ENCODE measurements at regions of chr1 and their contacts with region 1.

Region 1: GRCh38 chr1:15100121-15100874 is 53.2 kb upstream of the TMEM51 start:
- DNase-seq: peak; percentile 19 to 60 (median 35)
- ATAC-seq: peak; percentile 55
- H3K4me3 ChIP-seq: no peak overlapping the region
- H3K4me3 Mint-ChIP-seq: no peak overlapping the region
- H3K27ac ChIP-seq: no peak overlapping the region
- H3K27ac Mint-ChIP-seq: no peak overlapping the region
- H3K4me1 ChIP-seq: no peaks in the 10 kb centered on the region
- H3K4me1 Mint-ChIP-seq: peaks cover 7% of the 10 kb centered on the region
- H3K27me3 ChIP-seq: peaks cover 0 to 9% of the 10 kb centered on the region in 2 experiments
- H3K27me3 Mint-ChIP-seq: peaks cover 31% of the 10 kb centered on the region
- CTCF ChIP-seq: peak; percentile 69

Region 2: DNA sequence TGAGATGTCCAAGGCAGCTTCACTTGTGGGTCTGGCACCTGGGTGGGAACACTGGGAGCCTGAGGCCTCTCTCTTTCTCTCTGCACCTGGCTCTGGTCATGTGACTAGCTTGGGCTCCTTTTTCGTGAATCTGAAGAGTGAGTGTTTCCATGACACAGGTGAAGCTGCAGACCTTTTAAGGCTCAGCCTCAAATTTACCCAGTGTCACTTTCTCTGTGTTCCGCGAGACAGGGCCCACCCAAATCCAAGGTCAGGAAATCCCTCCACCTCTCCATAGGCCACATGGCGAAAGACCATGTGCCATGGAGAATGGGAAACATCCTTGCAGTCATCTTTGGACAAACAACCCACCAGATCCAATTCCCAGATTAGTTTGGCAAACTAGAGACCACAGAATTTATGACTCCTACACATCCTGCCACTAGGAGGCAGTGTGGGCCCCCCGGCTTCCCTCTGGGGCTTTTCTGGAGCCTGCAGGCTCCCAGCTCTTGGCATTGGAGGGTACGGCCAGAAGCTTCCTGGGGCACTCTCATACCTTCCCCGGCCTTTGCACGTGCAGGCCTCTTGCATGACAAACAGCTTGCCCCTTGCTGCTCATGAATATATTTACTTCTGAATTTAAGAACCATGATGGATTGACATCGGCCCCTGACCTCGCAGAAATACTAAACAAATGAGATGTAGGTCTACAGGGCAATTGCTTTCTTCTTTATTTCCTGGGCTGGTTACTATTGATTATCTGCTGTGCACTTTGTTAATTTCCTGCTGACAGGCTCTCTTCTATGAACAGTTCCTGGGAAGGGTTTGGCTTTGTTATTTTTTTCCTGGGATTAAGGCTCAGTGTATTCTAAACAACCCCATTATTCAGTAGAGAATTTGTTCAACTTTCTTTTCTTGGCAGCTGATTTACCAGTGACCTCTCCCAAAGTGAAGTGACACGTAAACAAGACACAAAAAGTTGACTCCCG is 321.1 kb before region 1 on chr1:
- CTCF ChIA-PET with region 1: no interaction called
- POLR2A ChIA-PET with region 1: no interaction called
- intact Hi-C with region 1: loop called in 1 of 2 experiments (anchors 2 kb)
- DNase-seq: peak in 5 of 9 experiments; percentile 7 to 20 (median 16)
- ATAC-seq: no peak
- H3K4me3 ChIP-seq: no peak overlapping the region
- H3K4me3 Mint-ChIP-seq: no peak overlapping the region
- H3K27ac ChIP-seq: no peak overlapping the region
- H3K27ac Mint-ChIP-seq: no peak overlapping the region
- H3K4me1 ChIP-seq: no peaks in the 10 kb centered on the region
- H3K4me1 Mint-ChIP-seq: no peaks in the 10 kb centered on the region
- H3K27me3 ChIP-seq: no peaks in the 10 kb centered on the region
- H3K27me3 Mint-ChIP-seq: no peaks in the 10 kb centered on the region
- CTCF ChIP-seq: peak; percentile 19